ENCODE measurements at regions of chr3 and their contacts with region 1.

Region 1: DNA sequence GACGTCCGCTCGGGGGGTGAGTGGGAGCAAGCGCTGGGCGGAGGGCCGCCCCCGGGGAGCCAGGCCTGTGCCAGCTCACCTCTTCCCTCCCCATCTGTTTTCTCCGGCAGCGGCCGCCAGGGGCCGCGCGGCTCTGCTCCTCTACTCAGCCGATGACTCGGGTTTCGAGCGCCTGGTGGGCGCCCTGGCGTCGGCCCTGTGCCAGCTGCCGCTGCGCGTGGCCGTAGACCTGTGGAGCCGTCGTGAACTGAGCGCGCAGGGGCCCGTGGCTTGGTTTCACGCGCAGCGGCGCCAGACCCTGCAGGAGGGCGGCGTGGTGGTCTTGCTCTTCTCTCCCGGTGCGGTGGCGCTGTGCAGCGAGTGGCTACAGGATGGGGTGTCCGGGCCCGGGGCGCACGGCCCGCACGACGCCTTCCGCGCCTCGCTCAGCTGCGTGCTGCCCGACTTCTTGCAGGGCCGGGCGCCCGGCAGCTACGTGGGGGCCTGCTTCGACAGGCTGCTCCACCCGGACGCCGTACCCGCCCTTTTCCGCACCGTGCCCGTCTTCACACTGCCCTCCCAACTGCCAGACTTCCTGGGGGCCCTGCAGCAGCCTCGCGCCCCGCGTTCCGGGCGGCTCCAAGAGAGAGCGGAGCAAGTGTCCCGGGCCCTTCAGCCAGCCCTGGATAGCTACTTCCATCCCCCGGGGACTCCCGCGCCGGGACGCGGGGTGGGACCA is 632 bp upstream of the CRELD1 start:
- DNase-seq: peak; percentile 40
- ATAC-seq: peak; percentile 88
- H3K4me3 ChIP-seq: peak overlapping the region; percentile 89
- H3K27ac ChIP-seq: peak overlapping the region; percentile 71
- H3K4me1 ChIP-seq: peaks cover 9% of the 10 kb centered on the region
- H3K27me3 ChIP-seq: no peaks in the 10 kb centered on the region
- CTCF ChIP-seq: peak; percentile 82 to 93 (median 90)
- EP300 ChIP-seq: no peak
- POLR2A ChIP-seq: peak; percentile 66
- RAD21 ChIP-seq: peak; percentile 61

Region 2: DNA sequence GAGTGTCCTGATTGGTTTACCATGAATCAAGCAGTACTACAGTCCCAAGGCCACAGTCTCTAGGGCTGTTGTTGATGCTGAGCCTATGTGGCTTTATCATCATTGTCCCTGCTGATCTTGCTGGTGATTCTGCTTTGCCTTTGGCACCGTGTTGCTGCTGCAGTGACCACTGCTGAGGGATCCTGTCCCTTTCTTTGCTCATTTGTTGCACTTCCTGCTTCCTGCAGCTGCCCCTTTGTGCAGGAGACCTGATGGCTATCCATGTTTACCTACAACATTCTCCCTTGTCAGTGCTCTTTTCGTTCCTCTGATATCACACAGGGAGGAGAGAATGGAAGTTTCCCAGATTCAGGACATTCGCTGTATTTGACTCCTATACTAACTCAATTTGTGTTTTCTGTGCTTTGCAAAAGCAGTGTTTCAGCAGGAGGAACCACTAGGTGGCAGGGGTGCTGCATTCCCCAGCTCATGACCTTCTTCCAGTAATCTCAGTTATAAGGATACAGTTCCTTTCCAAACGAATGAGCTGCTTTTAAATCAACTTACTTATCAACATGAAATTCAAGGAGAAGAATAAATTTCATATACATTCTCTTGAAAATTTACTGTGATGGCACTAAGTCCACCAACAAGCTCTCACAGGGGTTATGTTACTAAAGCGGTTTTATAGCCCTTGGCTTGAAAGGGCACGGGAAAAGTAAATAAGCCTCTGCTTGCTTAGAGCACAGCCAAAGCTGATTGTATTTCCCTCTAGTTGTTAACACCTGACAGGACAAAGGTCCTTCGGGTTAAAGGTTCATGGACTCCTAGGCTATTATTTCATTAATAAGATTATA is 579.9 kb before region 1 on chr3:
- CTCF ChIA-PET with region 1: interaction called, 10 read pairs
- POLR2A ChIA-PET with region 1: no interaction called
- RAD21 ChIA-PET with region 1: no interaction called
- SMC1A ChIA-PET with region 1: interaction called, 3 read pairs
- in situ Hi-C with region 1: no loop called
- intact Hi-C with region 1: no loop called
- DNase-seq: peak; percentile 9
- ATAC-seq: peak; percentile 90
- H3K4me3 ChIP-seq: no peak overlapping the region
- H3K27ac ChIP-seq: no peak overlapping the region
- H3K4me1 ChIP-seq: peaks cover 5% of the 10 kb centered on the region; the same call in 1 of the 2 replicates
- H3K27me3 ChIP-seq: no peaks in the 10 kb centered on the region
- CTCF ChIP-seq: peak; percentile 83 to 94 (median 93)
- EP300 ChIP-seq: no peak
- POLR2A ChIP-seq: no peak
- RAD21 ChIP-seq: peak; percentile 89

Region 3: GRCh38 chr3:9792405-9793160 is 140.4 kb before region 1 on chr3 and contains the starts of genes ARPC4 and TADA3:
- CTCF ChIA-PET with region 1: interaction called, 6 read pairs
- POLR2A ChIA-PET with region 1: interaction called, 4 read pairs
- RAD21 ChIA-PET with region 1: interaction called, 7 read pairs
- SMC1A ChIA-PET with region 1: interaction called, 4 read pairs
- in situ Hi-C with region 1: no loop called
- intact Hi-C with region 1: loop called (anchors 5 kb)
- DNase-seq: peak; percentile 92
- ATAC-seq: peak; percentile 88
- H3K4me3 ChIP-seq: peak within 1 kb of the TSS; percentile 89
- H3K27ac ChIP-seq: peak within 1 kb of the TSS; percentile 99
- H3K4me1 ChIP-seq: peaks cover 14% of the 10 kb centered on the region
- H3K27me3 ChIP-seq: no peaks in the 10 kb centered on the region
- CTCF ChIP-seq: no peak
- EP300 ChIP-seq: no peak
- POLR2A ChIP-seq: peak; percentile 83
- RAD21 ChIP-seq: no peak
- polyA plus RNA-seq, gene ARPC4: 42.0 to 55.9 TPM
- polyA plus RNA-seq, gene TADA3: 2.6 to 9.0 TPM

Region 4: DNA sequence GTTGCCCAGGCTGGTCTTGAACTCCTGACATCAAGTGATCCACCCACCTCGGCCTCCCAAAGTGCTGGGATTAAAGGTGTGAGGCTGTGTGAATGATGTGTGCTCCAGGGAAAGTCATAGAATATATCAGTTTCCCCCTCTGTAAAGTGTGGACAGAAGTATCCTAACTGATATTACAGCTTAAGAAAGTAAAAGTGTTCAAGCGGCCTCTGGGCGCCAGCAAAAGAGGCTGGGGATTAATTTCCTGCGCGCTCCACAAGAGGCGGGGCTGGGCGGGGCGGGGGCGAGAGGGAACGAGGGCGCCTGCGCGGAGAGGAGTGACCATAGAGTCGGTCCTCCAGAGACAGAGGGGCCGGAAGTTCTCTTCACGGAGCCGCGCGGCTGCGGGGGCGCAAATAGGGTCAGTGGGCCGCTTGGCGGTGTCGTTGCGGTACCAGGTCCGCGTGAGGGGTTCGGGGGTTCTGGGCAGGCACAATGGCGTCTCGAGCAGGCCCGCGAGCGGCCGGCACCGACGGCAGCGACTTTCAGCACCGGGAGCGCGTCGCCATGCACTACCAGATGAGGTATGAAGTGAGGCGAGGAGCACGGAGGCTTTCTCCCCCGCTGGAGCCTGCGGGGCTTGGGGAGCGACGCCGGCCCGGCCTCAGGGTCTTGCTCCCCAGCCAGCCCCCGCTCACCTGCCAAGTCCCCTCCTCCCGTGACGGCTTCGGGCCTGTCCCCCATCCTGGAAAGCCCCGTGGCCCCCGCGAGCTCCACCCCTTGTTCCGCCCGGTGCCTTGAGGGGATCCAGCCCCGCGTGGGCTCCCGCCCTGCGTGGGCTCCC is 42.5 kb before region 1 on chr3 and contains the start of gene JAGN1:
- CTCF ChIA-PET with region 1: interaction called, 28 read pairs
- POLR2A ChIA-PET with region 1: interaction called, 19 read pairs
- RAD21 ChIA-PET with region 1: interaction called, 17 read pairs
- SMC1A ChIA-PET with region 1: interaction called, 13 read pairs
- in situ Hi-C with region 1: no loop called
- intact Hi-C with region 1: loop called (anchors 2 kb)
- DNase-seq: peak; percentile 62
- ATAC-seq: peak; percentile 90
- H3K4me3 ChIP-seq: peak within 1 kb of the TSS; percentile 80
- H3K27ac ChIP-seq: peak within 1 kb of the TSS; percentile 98
- H3K4me1 ChIP-seq: no peaks in the 10 kb centered on the region
- H3K27me3 ChIP-seq: no peaks in the 10 kb centered on the region
- CTCF ChIP-seq: peak in 2 of 3 experiments; percentile 4 to 28; a peak in 1 of 6 replicates
- EP300 ChIP-seq: 0 out of 4 replicates have a peak, but pooled peaks of 1 of the 2 experiments have one; percentile 7
- POLR2A ChIP-seq: peak; percentile 95
- RAD21 ChIP-seq: no peak
- polyA plus RNA-seq, gene JAGN1: 26.2 to 28.6 TPM

Region 5: DNA sequence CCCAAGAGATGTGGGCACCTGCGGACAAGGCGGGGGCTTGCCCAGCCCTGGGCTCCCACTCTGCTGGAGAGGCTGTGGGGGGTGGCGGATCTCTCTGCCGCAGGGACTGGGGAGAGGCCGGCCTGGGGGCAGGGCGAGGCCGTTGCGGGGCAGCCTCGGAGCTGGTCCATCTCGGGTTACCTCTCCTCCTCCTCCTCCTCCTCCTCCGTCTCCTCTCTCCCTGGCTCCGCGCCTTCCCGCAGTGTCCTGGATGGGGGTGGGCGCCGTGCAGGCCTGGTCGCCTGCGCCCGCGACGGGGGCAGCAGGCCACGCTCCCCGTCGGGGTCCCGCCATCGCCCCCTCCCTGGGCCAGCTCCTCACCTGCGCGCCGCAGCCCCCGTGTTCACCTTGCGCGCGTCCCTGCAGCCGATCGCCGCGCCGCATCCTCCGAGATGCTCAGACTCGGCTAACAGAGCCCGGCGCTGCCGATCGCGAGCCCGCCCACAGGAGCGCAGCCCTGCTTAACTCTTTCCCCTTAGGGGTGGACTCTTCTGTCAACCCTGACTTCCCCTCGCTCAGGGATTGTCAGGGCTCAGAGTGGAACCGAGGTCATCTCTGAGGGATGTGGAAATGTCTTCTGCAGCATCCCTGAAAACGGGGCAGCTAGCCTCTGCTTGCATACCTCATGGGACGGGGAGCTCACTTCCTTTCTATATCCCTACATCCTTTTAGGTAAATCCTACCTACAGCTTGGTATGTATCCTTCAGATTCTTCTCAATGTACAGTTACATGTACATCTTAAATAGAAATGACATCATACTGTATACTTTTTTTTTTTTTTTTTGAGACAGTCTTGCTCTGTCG is 19.2 kb after region 1 on chr3 and contains the start of gene PRRT3:
- CTCF ChIA-PET with region 1: interaction called, 29 read pairs
- POLR2A ChIA-PET with region 1: interaction called, 11 read pairs
- RAD21 ChIA-PET with region 1: interaction called, 24 read pairs
- SMC1A ChIA-PET with region 1: interaction called, 16 read pairs
- in situ Hi-C with region 1: no loop called
- intact Hi-C with region 1: loop called (anchors 2 kb)
- DNase-seq: no peak
- ATAC-seq: peak; percentile 96
- H3K4me3 ChIP-seq: peak within 1 kb of the TSS; percentile 82
- H3K27ac ChIP-seq: peak within 1 kb of the TSS; percentile 69
- H3K4me1 ChIP-seq: peaks cover 3% of the 10 kb centered on the region; the same call in 1 of the 2 replicates
- H3K27me3 ChIP-seq: no peaks in the 10 kb centered on the region
- CTCF ChIP-seq: no peak
- EP300 ChIP-seq: no peak
- POLR2A ChIP-seq: peak; percentile 77
- RAD21 ChIP-seq: no peak
- polyA plus RNA-seq, gene PRRT3: 0.53 to 1.1 TPM

Region 6: GRCh38 chr3:9986237-9986725 is 53.3 kb after region 1 on chr3:
- CTCF ChIA-PET with region 1: interaction called, 12 read pairs
- POLR2A ChIA-PET with region 1: no interaction called
- RAD21 ChIA-PET with region 1: interaction called, 24 read pairs
- SMC1A ChIA-PET with region 1: interaction called, 11 read pairs
- in situ Hi-C with region 1: no loop called
- intact Hi-C with region 1: loop called (anchors 2 kb)
- DNase-seq: no peak
- ATAC-seq: peak; percentile 57
- H3K4me3 ChIP-seq: peak overlapping the region; percentile 87
- H3K27ac ChIP-seq: peak overlapping the region; percentile 66
- H3K4me1 ChIP-seq: 0 out of 2 replicates have a peak, but pooled peaks cover 3% of the 10 kb centered on the region
- H3K27me3 ChIP-seq: no peaks in the 10 kb centered on the region
- CTCF ChIP-seq: no peak
- EP300 ChIP-seq: no peak
- POLR2A ChIP-seq: no peak
- RAD21 ChIP-seq: no peak

Region 7: GRCh38 chr3:10224784-10225665 is 292.0 kb after region 1 on chr3:
- CTCF ChIA-PET with region 1: interaction called, 18 read pairs
- POLR2A ChIA-PET with region 1: interaction called, 6 read pairs
- RAD21 ChIA-PET with region 1: interaction called, 16 read pairs
- SMC1A ChIA-PET with region 1: interaction called, 4 read pairs
- in situ Hi-C with region 1: no loop called
- intact Hi-C with region 1: no loop called
- DNase-seq: no peak
- ATAC-seq: peak; percentile 66
- H3K4me3 ChIP-seq: no peak overlapping the region
- H3K27ac ChIP-seq: peak overlapping the region; percentile 31
- H3K4me1 ChIP-seq: peaks cover 62% of the 10 kb centered on the region
- H3K27me3 ChIP-seq: no peaks in the 10 kb centered on the region
- CTCF ChIP-seq: peak; percentile 73 to 89 (median 87)
- EP300 ChIP-seq: no peak
- POLR2A ChIP-seq: no peak
- RAD21 ChIP-seq: peak; percentile 96